ENCODE measurements at regions of chr5 and their contacts with region 1.

Region 1: GRCh38 chr5:7592910-7593309 is 197.0 kb downstream of the ADCY2 start:
- DNase-seq: peak in 1 of 2 experiments; percentile 58
- H3K4me3 ChIP-seq: no peak overlapping the region
- H3K27ac ChIP-seq: no peak overlapping the region
- H3K4me1 ChIP-seq: peaks cover 0 to 13% (median 7%) of the 10 kb centered on the region in 4 experiments; a peak in 6 of 7 replicates
- H3K27me3 ChIP-seq: no peaks in the 10 kb centered on the region
- CTCF ChIP-seq: peak; percentile 55 to 67 (median 62)
- EP300 ChIP-seq: no peak
- POLR2A ChIP-seq: no peak
- RAD21 ChIP-seq: peak; percentile 69

Region 2: DNA sequence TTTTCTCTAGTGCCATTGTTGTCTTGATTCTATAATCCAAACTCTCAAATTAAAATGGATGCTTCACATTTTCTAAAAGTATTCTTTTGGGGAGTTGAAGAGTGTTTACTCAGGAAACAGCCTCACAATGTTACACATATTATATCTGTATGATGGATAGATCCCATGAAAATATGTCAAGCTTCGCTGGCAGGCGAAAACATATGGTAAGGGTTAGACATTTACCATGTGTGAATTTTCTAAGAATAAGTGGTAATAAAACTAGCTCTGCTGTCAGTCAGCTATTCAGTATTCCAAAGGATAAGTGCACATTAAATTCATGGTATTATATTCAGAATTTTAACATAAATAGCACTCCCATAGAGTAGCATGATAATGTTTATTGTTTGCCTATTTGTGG is 210.3 kb before region 1 on chr5:
- CTCF ChIA-PET with region 1: no interaction called
- POLR2A ChIA-PET with region 1: no interaction called
- DNase-seq: no peak
- H3K4me3 ChIP-seq: no peak overlapping the region
- H3K27ac ChIP-seq: no peak overlapping the region
- H3K4me1 ChIP-seq: no peaks in the 10 kb centered on the region
- H3K27me3 ChIP-seq: no peaks in the 10 kb centered on the region; a peak in 1 of 7 replicates
- CTCF ChIP-seq: no peak
- EP300 ChIP-seq: no peak
- POLR2A ChIP-seq: no peak
- RAD21 ChIP-seq: no peak

Region 3: GRCh38 chr5:7494481-7495130 is 98.3 kb before region 1 on chr5:
- CTCF ChIA-PET with region 1: no interaction called
- POLR2A ChIA-PET with region 1: no interaction called
- DNase-seq: no peak
- H3K4me3 ChIP-seq: no peak overlapping the region
- H3K27ac ChIP-seq: no peak overlapping the region
- H3K4me1 ChIP-seq: peaks cover 3 to 18% (median 13%) of the 10 kb centered on the region in 4 experiments
- H3K27me3 ChIP-seq: no peaks in the 10 kb centered on the region
- CTCF ChIP-seq: no peak
- EP300 ChIP-seq: no peak
- POLR2A ChIP-seq: no peak
- RAD21 ChIP-seq: no peak

Region 4: DNA sequence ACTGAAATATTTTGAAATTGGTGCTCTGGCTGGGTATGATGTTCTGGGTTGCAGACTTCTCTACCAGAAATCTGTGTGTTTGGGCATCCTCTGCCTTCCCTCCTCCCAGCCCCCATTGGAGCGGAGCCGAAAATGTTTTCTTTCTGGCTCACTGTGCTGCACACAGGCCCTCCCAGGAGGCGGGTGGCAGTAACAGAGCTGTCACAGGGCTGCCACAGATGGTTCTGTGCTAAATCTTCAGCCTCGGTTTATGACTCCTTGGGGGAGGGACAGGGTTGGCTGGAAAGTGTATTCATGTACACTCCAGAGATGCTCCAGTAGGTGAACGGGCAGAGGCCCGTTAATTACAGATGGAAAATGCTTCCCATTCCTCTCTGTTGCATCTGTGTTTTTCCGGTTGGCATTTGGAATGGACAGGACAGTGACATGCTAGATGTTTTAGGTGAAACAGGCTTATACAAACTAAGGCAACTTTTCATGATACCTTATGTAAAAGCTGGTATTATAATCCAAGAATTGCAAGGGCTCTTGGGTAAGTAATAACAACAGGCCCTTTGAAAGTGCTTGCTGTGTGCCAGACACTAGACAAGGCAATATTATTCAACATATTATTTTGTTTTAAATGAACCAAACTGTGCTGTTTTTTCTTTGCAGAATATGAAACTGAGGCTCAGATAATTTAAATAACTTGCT is 16.7 kb before region 1 on chr5:
- CTCF ChIA-PET with region 1: interaction called, 19 read pairs
- POLR2A ChIA-PET with region 1: no interaction called
- DNase-seq: no peak
- H3K4me3 ChIP-seq: no peak overlapping the region
- H3K27ac ChIP-seq: no peak overlapping the region
- H3K4me1 ChIP-seq: peaks cover 0 to 3% (median 0%) of the 10 kb centered on the region in 4 experiments; a peak in 1 of 7 replicates
- H3K27me3 ChIP-seq: no peaks in the 10 kb centered on the region
- CTCF ChIP-seq: no peak
- EP300 ChIP-seq: no peak
- POLR2A ChIP-seq: no peak
- RAD21 ChIP-seq: no peak

Measured in H1 (cell line).